CD8-positive, alpha-beta memory T cell (primary cell): ENCODE measurements at regions of chr15 and their contacts with region 1.

Region 1: DNA sequence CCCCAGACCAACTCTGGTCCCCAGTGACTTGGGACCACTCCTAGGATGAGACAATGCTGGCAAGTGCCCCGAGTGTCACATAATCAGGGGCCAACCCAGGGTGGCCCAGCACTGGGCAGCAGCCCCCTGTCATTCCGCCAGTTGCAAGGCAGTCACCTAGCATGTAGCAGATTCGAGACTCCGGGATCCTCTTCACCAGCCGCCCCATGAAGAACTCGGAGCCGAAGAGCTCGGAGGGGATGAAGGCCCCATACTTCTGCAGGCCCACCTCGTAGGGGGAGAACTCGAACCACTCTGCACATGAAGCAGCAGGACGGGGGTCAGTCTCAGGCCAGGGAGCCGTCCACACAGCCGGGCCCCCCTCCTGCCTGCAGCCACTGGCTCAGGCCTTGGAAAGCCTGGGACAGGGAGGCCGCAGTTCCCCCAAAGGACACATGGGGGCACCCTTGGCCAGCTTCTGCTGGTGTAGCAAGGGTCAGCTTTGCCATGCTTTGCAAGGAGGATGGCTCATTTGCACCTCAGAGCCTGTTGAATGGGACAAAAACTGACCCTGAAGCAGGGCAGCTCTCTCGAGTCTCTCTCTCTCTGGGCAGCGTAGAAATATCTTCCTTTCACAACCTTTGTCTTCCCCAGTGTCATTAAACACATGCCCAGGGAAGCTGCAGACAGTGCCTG is 17.0 kb upstream of the EHD4 start:
- DNase-seq: peak; percentile 61 to 80 (median 68)
- H3K4me3 ChIP-seq: no peak overlapping the region
- H3K4me3 Mint-ChIP-seq: no peak overlapping the region
- H3K27ac ChIP-seq: no peak overlapping the region
- H3K27ac Mint-ChIP-seq: no peak overlapping the region
- H3K4me1 ChIP-seq: no peaks in the 10 kb centered on the region
- H3K4me1 Mint-ChIP-seq: no peaks in the 10 kb centered on the region
- H3K27me3 ChIP-seq: no peaks in the 10 kb centered on the region
- H3K27me3 Mint-ChIP-seq: no peaks in the 10 kb centered on the region

Region 2: GRCh38 chr15:41972253-41973242 is 16.8 kb before region 1 on chr15 and contains the start of gene EHD4:
- CTCF ChIA-PET with region 1: interaction called, 17 read pairs
- POLR2A ChIA-PET with region 1: interaction called, 6 read pairs
- DNase-seq: peak; percentile 88 to 98 (median 94)
- H3K4me3 ChIP-seq: peak within 1 kb of the TSS; percentile 90
- H3K4me3 Mint-ChIP-seq: peak within 1 kb of the TSS; percentile 94 to 97 (median 95)
- H3K27ac ChIP-seq: peak within 1 kb of the TSS; percentile 91
- H3K27ac Mint-ChIP-seq: peak within 1 kb of the TSS; percentile 82 to 99 (median 97)
- H3K4me1 ChIP-seq: peaks cover 31% of the 10 kb centered on the region
- H3K4me1 Mint-ChIP-seq: peaks cover 42 to 50% (median 45%) of the 10 kb centered on the region in 3 donors
- H3K27me3 ChIP-seq: no peaks in the 10 kb centered on the region
- H3K27me3 Mint-ChIP-seq: peaks cover 10 to 24% of the 10 kb centered on the region in 2 donors
- total RNA-seq, gene EHD4: 24.2 to 26.4 TPM

Region 3: DNA sequence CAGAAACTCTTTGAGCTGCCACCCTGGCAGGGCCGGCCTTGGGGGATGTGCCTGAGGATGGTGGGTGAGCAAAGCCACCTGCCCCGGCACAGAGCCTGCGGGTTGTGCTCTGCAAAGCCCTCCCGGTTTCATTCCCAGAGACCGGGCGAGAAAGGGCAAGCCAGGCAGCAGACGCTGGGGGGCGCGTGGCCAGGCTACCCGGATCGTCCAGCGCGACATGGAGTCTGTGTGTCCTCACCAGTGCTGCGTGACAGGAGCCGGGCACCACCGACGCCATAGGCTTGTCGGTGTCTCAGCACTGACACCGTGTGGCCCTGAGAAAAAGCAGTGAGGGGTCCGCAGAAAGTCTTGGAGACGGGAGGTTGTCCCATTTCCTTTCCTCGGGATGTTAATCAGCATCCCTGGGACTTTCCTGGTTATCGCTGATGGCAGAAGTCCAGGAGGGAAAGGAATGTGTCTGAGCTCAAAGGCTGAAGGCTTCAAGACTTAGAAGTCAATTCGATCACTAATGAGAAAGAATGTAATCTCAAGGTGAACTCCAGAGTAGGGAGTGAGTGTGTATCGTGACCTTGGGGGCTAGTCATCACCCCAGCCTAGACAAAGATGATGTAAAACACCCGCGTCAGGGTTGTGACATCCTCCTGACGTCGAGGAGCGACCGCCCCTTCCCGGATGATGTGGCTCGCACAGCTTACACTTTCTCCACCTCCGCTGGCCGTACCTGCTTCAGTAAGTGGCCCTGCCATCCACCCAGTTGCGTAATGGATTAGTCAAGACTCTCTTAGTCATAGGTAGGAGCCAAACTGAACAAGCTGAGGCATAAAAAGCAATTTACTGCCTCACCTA is 67.8 kb after region 1 on chr15:
- CTCF ChIA-PET with region 1: interaction called, 14 read pairs
- POLR2A ChIA-PET with region 1: no interaction called
- DNase-seq: peak; percentile 31 to 69 (median 55)
- H3K4me3 ChIP-seq: peak overlapping the region; percentile 14
- H3K4me3 Mint-ChIP-seq: peak overlapping the region; percentile 10 to 85 (median 66)
- H3K27ac ChIP-seq: no peak overlapping the region
- H3K27ac Mint-ChIP-seq: peak overlapping the region; percentile 15 to 96 (median 74)
- H3K4me1 ChIP-seq: peaks cover 4% of the 10 kb centered on the region
- H3K4me1 Mint-ChIP-seq: peaks cover 7 to 15% (median 8%) of the 10 kb centered on the region in 3 donors
- H3K27me3 ChIP-seq: peaks cover 8% of the 10 kb centered on the region
- H3K27me3 Mint-ChIP-seq: peaks cover 23 to 41% of the 10 kb centered on the region in 2 donors

Region 4: GRCh38 chr15:42084460-42085235 is 95.3 kb after region 1 on chr15:
- CTCF ChIA-PET with region 1: interaction called, 17 read pairs
- POLR2A ChIA-PET with region 1: no interaction called
- DNase-seq: peak in 4 of 5 donors; percentile 19 to 52 (median 28)
- H3K4me3 ChIP-seq: no peak overlapping the region
- H3K4me3 Mint-ChIP-seq: peak overlapping the region in 3 of 7 donors; percentile 11 to 44 (median 23)
- H3K27ac ChIP-seq: no peak overlapping the region
- H3K27ac Mint-ChIP-seq: peak overlapping the region in 2 of 8 donors; percentile 11 to 38
- H3K4me1 ChIP-seq: peaks cover 8% of the 10 kb centered on the region
- H3K4me1 Mint-ChIP-seq: peaks cover 0 to 9% (median 4%) of the 10 kb centered on the region in 3 donors
- H3K27me3 ChIP-seq: peaks cover 4% of the 10 kb centered on the region
- H3K27me3 Mint-ChIP-seq: peaks cover 14 to 29% of the 10 kb centered on the region in 2 donors